ENCODE measurements at regions of chr6 and their contacts with region 1.

Region 1: DNA sequence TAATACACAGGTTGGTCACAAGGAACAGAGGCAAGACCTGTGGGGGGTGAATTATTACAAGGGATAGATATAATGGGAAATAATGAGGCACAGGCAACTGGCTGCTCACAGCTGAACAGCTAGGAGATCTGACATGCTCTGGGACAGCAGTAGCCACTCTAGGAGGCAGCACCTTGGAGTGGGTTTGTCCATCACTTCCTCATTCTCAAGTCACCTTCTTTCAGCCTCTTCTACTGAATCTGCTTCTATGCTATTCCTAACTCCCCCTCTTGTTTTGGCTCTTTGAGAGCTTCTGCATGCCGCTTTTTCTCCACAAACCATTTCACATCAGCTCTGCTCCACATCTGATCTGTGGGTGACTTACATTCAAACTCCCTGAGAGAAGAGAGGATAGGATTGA is 345.5 kb upstream of the MAP3K7 start:
- DNase-seq: no peak
- ATAC-seq: no peak
- H3K4me3 ChIP-seq: no peak overlapping the region
- H3K27ac ChIP-seq: no peak overlapping the region
- H3K4me1 ChIP-seq: no peaks in the 10 kb centered on the region
- H3K27me3 ChIP-seq: peaks cover 0 to 1% of the 10 kb centered on the region in 2 experiments; a peak in 2 of 5 replicates
- CTCF ChIP-seq: no peak
- EP300 ChIP-seq: no peak
- POLR2A ChIP-seq: no peak
- RAD21 ChIP-seq: no peak

Region 2: GRCh38 chr6:90425161-90425641 is 507.1 kb before region 1 on chr6:
- CTCF ChIA-PET with region 1: no interaction called
- POLR2A ChIA-PET with region 1: no interaction called
- in situ Hi-C with region 1: no loop called
- intact Hi-C with region 1: no loop called
- DNase-seq: no peak
- ATAC-seq: no peak
- H3K4me3 ChIP-seq: no peak overlapping the region
- H3K27ac ChIP-seq: no peak overlapping the region
- H3K4me1 ChIP-seq: no peaks in the 10 kb centered on the region
- H3K27me3 ChIP-seq: no peaks in the 10 kb centered on the region; a peak in 1 of 5 replicates
- CTCF ChIP-seq: no peak
- EP300 ChIP-seq: no peak
- POLR2A ChIP-seq: no peak
- RAD21 ChIP-seq: no peak

Region 3: DNA sequence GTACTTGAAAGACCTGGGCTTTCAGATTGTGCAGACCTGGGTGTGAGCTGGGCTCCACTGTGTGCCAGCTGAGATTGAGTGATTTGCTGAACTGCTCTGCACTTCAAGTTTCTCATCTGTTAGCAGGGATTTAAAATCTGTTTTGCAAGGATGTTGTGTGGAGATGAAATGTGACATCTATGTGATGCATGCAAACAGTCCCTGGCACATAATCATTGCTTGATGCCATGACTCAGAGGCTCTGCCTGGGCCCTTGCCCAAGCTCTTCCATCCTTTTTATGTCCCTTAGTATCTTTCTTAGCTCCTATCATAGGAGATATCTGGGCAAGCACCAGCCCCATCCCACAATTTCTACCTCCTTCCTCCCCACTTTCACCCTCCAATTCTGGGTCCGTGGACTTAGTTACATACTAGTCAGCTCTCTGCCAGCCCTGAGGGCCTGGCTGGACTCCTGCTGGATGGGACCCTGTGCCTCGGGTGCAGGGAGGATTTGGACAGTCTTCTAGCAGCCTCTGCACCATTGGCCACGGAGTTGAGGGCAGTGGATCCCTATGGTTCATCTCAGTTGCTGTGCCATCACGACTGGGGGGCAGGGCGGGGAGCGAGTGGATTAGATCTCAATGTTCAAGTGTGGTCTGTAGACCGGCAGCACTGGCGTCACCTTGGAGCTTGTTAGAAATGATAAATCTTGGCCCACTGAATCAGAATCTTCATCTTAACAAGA is 449.1 kb before region 1 on chr6:
- CTCF ChIA-PET with region 1: no interaction called
- POLR2A ChIA-PET with region 1: no interaction called
- in situ Hi-C with region 1: no loop called
- intact Hi-C with region 1: no loop called
- DNase-seq: no peak
- ATAC-seq: no peak
- H3K4me3 ChIP-seq: no peak overlapping the region
- H3K27ac ChIP-seq: no peak overlapping the region
- H3K4me1 ChIP-seq: peaks cover 4% of the 10 kb centered on the region; the same call in 1 of the 2 replicates
- H3K27me3 ChIP-seq: peaks cover 0 to 23% of the 10 kb centered on the region in 2 experiments; a peak in 2 of 5 replicates
- CTCF ChIP-seq: no peak
- EP300 ChIP-seq: no peak
- POLR2A ChIP-seq: no peak
- RAD21 ChIP-seq: no peak

Region 4: GRCh38 chr6:90497411-90497810 is 434.9 kb before region 1 on chr6:
- CTCF ChIA-PET with region 1: no interaction called
- POLR2A ChIA-PET with region 1: no interaction called
- in situ Hi-C with region 1: no loop called
- intact Hi-C with region 1: loop called (anchors 5 kb)
- DNase-seq: peak; percentile 31
- ATAC-seq: peak; percentile 93
- H3K4me3 ChIP-seq: no peak overlapping the region
- H3K27ac ChIP-seq: no peak overlapping the region
- H3K4me1 ChIP-seq: peaks cover 10% of the 10 kb centered on the region
- H3K27me3 ChIP-seq: no peaks in the 10 kb centered on the region; a peak in 1 of 5 replicates
- CTCF ChIP-seq: peak; percentile 80
- EP300 ChIP-seq: no peak
- POLR2A ChIP-seq: no peak
- RAD21 ChIP-seq: peak; percentile 64; the same call in 1 of the 2 replicates

Region 5: GRCh38 chr6:90610751-90611542 is 321.4 kb before region 1 on chr6:
- CTCF ChIA-PET with region 1: no interaction called
- POLR2A ChIA-PET with region 1: no interaction called
- in situ Hi-C with region 1: no loop called
- intact Hi-C with region 1: no loop called
- DNase-seq: no peak
- ATAC-seq: peak; percentile 89
- H3K4me3 ChIP-seq: peak overlapping the region; percentile 50 to 66 (median 55)
- H3K27ac ChIP-seq: no peak overlapping the region
- H3K4me1 ChIP-seq: 0 out of 2 replicates have a peak, but pooled peaks cover 7% of the 10 kb centered on the region
- H3K27me3 ChIP-seq: peaks cover 2 to 32% of the 10 kb centered on the region in 2 experiments; a peak in 4 of 5 replicates
- CTCF ChIP-seq: no peak
- EP300 ChIP-seq: no peak
- POLR2A ChIP-seq: no peak
- RAD21 ChIP-seq: no peak

Region 6: GRCh38 chr6:91045161-91045560 is 112.8 kb after region 1 on chr6:
- CTCF ChIA-PET with region 1: no interaction called
- POLR2A ChIA-PET with region 1: no interaction called
- in situ Hi-C with region 1: no loop called
- intact Hi-C with region 1: no loop called
- DNase-seq: no peak
- ATAC-seq: no peak
- H3K4me3 ChIP-seq: no peak overlapping the region
- H3K27ac ChIP-seq: no peak overlapping the region
- H3K4me1 ChIP-seq: no peaks in the 10 kb centered on the region
- H3K27me3 ChIP-seq: no peaks in the 10 kb centered on the region
- CTCF ChIP-seq: no peak
- EP300 ChIP-seq: no peak
- POLR2A ChIP-seq: no peak
- RAD21 ChIP-seq: no peak